ENCODE measurements at regions of chr1 and their contacts with region 1.

Region 1: GRCh38 chr1:234851450-234852438 is 241.8 kb upstream of the IRF2BP2 start:
- DNase-seq: no peak
- ATAC-seq: no peak
- H3K4me3 ChIP-seq: no peak overlapping the region
- H3K27ac ChIP-seq: no peak overlapping the region
- H3K4me1 ChIP-seq: no peaks in the 10 kb centered on the region
- H3K27me3 ChIP-seq: no peaks in the 10 kb centered on the region
- CTCF ChIP-seq: no peak
- POLR2A ChIP-seq: no peak

Region 2: GRCh38 chr1:234745844-234746797 is 105.6 kb before region 1 on chr1:
- in situ Hi-C with region 1: loop called in 2 of 4 experiments (anchors 25 kb)
- intact Hi-C with region 1: loop called (anchors 5 kb)
- DNase-seq: no peak
- ATAC-seq: no peak
- H3K4me3 ChIP-seq: no peak overlapping the region
- H3K27ac ChIP-seq: no peak overlapping the region
- H3K4me1 ChIP-seq: peaks cover 8 to 10% of the 10 kb centered on the region in 2 donors
- H3K27me3 ChIP-seq: no peaks in the 10 kb centered on the region
- CTCF ChIP-seq: no peak
- POLR2A ChIP-seq: no peak

Region 3: DNA sequence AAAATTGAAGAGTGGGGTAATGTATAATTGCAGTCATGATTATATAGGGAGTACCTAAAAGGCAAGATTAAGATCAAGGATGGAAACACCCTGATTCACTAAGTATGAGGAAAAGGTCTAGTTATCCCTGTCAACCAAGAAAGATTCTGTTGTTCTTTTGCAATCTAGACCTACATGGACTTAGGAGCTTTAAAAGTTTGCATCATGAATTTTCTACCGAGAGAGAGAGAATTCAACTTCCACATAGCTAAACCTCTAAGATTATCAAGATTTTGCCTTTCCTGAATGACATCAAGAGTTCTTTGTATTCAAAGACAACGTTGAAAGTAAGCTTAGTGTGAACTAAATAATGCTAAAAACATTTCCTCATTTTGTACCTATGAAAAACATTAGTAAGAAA is 388.1 kb after region 1 on chr1:
- in situ Hi-C with region 1: no loop called
- intact Hi-C with region 1: no loop called
- DNase-seq: no peak
- ATAC-seq: no peak
- H3K4me3 ChIP-seq: no peak overlapping the region
- H3K27ac ChIP-seq: no peak overlapping the region
- H3K4me1 ChIP-seq: no peaks in the 10 kb centered on the region
- H3K27me3 ChIP-seq: no peaks in the 10 kb centered on the region
- CTCF ChIP-seq: no peak
- POLR2A ChIP-seq: no peak